ENCODE measurements at regions of chr16 and their contacts with region 1.

Region 1: GRCh38 chr16:28188085-28188916 is 23.5 kb downstream of the XPO6 start:
- DNase-seq: peak; percentile 57
- CTCF ChIP-seq: no peak

Region 2: DNA sequence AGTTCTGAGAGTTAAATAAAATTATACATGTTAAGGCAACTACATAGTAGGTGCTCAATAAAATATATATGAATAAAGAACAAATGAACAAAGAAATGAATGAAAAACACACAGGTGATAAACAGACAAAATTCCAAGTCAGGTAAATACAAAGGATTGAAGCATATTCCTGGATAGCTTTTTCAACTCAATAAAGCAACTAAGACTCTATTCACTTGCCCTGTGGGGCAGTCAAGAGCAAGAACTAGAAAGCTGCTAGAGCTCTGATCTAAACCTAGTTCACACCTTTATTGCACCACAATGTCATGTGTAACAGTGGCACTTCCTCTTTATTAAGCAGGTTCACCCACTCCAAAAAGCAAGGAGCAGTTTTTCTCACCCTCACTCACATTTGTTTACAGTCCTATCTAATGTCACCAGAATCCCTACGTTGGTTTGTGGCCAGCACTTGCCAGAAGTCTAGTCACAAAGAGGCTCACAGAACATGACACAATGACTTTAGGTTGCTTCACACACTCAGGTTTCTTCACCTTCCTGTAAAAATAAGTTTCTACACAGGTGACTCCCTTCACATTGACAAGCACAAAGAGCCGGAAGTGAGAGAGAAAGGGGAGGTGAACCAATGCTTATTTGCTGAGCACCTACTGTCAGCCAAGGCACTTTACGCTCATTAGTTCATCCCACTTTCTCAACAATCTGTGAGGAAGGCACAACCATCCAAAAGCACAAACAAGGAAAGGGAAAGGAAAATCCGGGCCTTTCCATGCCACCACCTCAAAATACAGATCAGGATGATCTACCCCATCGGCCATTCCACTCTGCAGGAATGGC is 47.3 kb before region 1 on chr16:
- CTCF ChIA-PET with region 1: interaction called, 3 read pairs
- POLR2A ChIA-PET with region 1: interaction called, 10 read pairs
- DNase-seq: peak; percentile 72
- CTCF ChIP-seq: no peak

Region 3: DNA sequence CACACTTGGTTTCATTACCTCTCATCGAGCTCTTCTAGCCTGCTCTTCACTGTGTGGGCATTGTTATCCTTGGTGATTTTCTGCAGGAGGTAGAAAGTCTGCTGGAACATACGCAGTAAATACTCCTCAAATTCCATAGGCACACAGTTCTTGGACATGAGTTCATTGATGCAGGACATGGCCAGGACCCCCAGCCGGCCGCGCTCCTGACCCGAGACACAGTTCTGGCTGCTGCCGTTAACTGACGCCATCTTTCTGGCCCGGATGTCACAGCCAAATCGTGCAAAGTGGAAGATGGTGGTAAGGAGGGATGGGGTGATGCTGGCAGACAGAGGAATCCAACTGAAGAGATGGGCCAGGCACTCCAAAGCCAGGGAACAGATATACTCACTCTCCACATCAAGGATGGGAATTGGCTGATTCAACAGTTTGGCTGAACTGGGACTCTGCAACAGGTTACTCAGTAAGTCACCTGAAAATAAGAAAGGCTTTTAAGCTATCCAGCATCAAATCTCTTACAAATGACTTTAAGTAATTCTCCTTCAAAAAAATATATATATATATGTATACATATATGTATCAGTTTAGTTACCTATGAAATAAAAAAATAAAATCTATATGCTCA is 32.1 kb before region 1 on chr16:
- CTCF ChIA-PET with region 1: no interaction called
- POLR2A ChIA-PET with region 1: no interaction called
- DNase-seq: no peak
- CTCF ChIP-seq: no peak

Region 4: DNA sequence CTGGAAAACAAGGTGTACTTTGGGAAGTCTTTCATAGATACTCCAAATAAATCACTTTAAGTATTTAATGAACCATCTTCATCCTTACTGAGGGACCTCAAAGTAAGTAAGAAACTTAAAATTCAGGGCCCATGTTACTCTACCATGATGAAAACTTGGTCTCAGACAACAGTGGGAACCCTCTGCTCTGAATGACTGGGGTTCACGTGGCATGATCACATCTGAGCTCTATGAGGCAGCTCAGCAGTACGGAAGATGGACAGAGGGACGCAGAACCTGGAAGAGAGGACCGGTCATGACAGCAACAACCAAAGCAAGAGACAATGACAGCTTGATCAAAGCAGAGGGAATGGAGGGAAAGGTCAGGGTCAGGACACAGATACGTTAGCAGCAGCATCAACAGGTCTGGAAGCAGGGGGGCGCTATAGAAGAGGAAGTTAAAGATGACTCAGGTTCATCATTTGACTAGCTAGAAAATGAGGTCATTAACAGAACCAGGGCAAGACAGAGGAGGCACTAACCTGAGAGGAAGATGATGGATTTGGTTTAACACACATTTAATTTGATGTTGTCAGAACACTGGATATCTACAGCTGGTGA is 13.9 kb after region 1 on chr16:
- CTCF ChIA-PET with region 1: interaction called, 46 read pairs
- POLR2A ChIA-PET with region 1: no interaction called
- DNase-seq: peak; percentile 54
- CTCF ChIP-seq: peak; percentile 10

Region 5: GRCh38 chr16:28211712-28212534 is 23.6 kb after region 1 on chr16 and contains the start of gene XPO6:
- CTCF ChIA-PET with region 1: interaction called, 23 read pairs
- POLR2A ChIA-PET with region 1: interaction called, 12 read pairs
- DNase-seq: peak; percentile 98
- CTCF ChIP-seq: no peak

Measured in GM10248 (cell line).